Dorsolateral prefrontal cortex (tissue), 120 donors: ENCODE measurements at regions of chrX and their contacts with region 1.

Region 1: GRCh38 chrX:54999717-55000598 is at the start of gene APEX2:
- DNase-seq: peak; percentile 74 to 92 (median 88)
- H3K4me3 ChIP-seq: peak within 1 kb of the TSS; percentile 36 to 80 (median 62)
- H3K27ac ChIP-seq: peak within 1 kb of the TSS; percentile 35 to 93 (median 82)
- H3K27me3 ChIP-seq: peaks cover 0 to 35% (median 1%) of the 10 kb centered on the region in 45 donors
- CTCF ChIP-seq: peak in 4 of 56 donors; percentile 9 to 25 (median 14)
- total RNA-seq, gene APEX2: 4.2 to 12.0 (median 6.3) TPM

Region 2: GRCh38 chrX:54639346-54640102 is 360.4 kb before region 1 on chrX:
- intact Hi-C with region 1: loop called (anchors 5 to 10 kb)
- DNase-seq: peak; percentile 74 to 92 (median 89)
- H3K4me3 ChIP-seq: peak overlapping the region; percentile 21 to 72 (median 54)
- H3K27ac ChIP-seq: peak overlapping the region; percentile 58 to 97 (median 88)
- H3K27me3 ChIP-seq: peaks cover 0 to 36% (median 0%) of the 10 kb centered on the region in 45 donors
- CTCF ChIP-seq: peak in 55 of 56 donors; percentile 38 to 78 (median 64)

Region 3: DNA sequence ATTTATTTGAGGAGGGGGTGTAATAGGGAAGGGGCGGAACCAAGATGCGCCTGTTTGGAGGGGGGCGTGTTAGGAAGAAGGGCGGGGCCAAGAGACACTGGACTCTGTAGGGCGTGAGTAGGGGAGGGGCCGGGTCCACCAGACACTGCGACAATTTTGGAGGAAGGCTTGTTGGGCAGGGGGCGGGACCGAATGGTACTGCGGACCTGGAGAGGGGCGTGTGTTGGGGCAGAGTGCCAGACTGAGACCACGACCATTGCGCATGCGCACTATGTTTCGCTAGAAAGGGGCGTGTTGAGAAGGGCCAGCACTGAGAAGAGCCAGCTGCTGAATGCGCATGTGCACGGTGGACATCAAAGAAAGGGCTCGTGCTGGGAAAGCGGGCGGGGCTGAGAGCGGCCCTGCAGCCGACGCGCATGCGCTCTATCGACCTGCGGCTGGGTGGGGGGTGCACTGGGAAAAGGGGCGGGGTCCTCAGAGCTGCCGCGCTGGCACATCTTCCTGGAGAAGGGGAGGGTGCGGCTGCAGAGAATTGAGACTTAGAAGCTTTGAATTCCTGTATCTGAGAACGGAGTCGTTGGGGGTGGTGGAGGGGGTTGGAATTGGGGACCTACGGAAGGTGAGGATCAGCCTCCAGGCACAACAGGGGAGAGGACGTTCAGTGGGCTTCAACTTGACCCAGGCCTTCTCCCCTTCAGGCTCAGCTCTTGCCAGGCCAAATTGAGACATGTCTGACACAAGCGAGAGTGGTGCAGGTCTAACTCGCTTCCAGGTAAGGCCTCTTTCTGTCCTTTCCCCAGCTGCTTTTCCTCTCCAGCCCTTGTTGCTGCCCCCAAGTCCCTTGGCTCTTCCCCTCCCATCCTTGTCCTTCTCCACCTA is 191.1 kb before region 1 on chrX:
- intact Hi-C with region 1: loop called in 1 of 2 experiments (anchors 10 kb)
- DNase-seq: peak; percentile 78 to 89 (median 86)
- H3K4me3 ChIP-seq: peak overlapping the region; percentile 31 to 86 (median 69)
- H3K27ac ChIP-seq: peak overlapping the region; percentile 32 to 97 (median 91)
- H3K27me3 ChIP-seq: peaks cover 0 to 67% (median 6%) of the 10 kb centered on the region in 45 donors
- CTCF ChIP-seq: no peak

Region 4: DNA sequence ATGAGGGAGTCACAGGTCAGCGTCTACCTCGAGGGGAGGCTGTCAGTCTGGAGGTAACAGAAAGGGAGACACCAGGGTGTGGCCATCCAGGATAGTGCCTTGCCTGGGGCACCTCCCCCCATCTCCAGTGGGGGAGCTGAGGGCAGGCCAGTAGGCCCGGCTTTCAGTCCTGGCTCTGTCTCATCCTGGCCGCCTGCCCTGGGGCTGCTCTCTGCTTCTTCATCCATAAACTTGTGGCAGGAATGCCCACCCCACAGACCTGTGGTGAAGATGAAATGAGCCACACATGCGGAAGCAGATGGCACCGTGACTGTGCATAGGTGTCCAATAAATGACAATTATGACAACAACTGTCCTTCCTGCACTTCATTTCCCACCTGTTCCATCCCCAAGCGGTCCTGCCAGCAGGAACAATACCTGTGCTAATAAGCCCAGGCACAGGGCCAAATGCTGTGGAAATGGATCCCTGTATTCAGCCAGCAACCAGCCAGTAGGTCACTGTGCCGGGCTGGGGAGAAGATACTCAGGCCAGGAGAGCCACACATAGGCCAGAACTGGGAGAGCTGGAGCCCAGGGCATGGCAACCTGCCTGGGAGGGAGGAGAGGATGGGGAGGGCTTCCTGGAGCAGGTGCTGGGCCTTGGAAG is 49.1 kb before region 1 on chrX:
- intact Hi-C with region 1: no loop called
- DNase-seq: peak in 1 of 10 donors; percentile 66
- H3K4me3 ChIP-seq: no peak overlapping the region
- H3K27ac ChIP-seq: no peak overlapping the region
- H3K27me3 ChIP-seq: peaks cover 0 to 80% (median 12%) of the 10 kb centered on the region in 45 donors
- CTCF ChIP-seq: no peak

Region 5: GRCh38 chrX:55160685-55161552 is 161.0 kb after region 1 on chrX:
- intact Hi-C with region 1: loop called in 1 of 2 experiments (anchors 10 kb)
- DNase-seq: peak; percentile 75 to 92 (median 88)
- H3K4me3 ChIP-seq: peak overlapping the region; percentile 36 to 75 (median 66)
- H3K27ac ChIP-seq: peak overlapping the region; percentile 29 to 96 (median 90)
- H3K27me3 ChIP-seq: peaks cover 0 to 43% (median 8%) of the 10 kb centered on the region in 45 donors
- CTCF ChIP-seq: peak in 51 of 56 donors; percentile 10 to 69 (median 46)

Region 6: GRCh38 chrX:55240788-55241340 is 240.9 kb after region 1 on chrX:
- intact Hi-C with region 1: no loop called
- DNase-seq: no peak
- H3K4me3 ChIP-seq: no peak overlapping the region
- H3K27ac ChIP-seq: no peak overlapping the region
- H3K27me3 ChIP-seq: peaks cover 0 to 35% (median 6%) of the 10 kb centered on the region in 45 donors
- CTCF ChIP-seq: no peak